ENCODE measurements at regions of chr9 and their contacts with region 1.

Region 1: DNA sequence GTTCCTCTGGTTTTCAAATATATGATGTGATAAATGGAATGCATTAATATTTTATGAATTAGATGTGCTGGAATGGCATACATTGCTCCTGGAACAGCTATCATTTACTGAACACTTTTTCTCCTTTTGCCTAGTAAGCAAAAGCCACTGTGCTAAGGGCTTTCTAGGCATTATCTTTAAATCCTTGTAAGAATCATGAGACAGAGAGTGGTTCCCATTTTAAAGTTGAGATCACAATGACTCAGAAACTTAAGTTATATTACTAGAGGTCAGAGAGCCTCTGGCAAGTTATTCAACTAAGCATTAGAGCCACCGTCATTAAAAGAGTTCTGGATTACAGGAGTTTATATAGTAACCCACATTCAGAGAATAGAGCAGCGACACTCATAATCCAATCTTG is 26.7 kb upstream of the FSD1L start:
- DNase-seq: no peak
- ATAC-seq: no peak

Region 2: DNA sequence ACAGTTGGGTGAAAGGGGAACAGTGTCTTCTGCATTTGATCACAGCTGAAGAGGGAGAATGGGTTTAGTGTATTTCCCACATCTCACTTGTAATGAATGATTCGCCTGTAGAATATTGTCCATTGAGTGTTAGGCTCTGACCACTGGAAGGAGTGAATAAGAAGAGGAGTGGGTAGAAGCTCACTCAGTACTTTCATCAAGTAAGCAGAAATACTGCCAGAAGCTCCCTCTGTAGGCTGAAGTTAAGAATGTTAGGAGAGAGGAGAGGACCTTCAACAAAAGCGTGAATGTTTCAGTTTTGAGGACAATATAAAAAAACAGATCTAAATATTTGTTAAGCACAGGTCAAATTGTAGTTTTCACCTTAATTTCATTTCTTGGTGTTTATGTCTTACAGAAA is 54.1 kb after region 1 on chr9:
- intact Hi-C with region 1: loop called (anchors 5 kb)
- DNase-seq: no peak
- ATAC-seq: no peak